ENCODE measurements at regions of chr3 and their contacts with region 1.

Region 1: DNA sequence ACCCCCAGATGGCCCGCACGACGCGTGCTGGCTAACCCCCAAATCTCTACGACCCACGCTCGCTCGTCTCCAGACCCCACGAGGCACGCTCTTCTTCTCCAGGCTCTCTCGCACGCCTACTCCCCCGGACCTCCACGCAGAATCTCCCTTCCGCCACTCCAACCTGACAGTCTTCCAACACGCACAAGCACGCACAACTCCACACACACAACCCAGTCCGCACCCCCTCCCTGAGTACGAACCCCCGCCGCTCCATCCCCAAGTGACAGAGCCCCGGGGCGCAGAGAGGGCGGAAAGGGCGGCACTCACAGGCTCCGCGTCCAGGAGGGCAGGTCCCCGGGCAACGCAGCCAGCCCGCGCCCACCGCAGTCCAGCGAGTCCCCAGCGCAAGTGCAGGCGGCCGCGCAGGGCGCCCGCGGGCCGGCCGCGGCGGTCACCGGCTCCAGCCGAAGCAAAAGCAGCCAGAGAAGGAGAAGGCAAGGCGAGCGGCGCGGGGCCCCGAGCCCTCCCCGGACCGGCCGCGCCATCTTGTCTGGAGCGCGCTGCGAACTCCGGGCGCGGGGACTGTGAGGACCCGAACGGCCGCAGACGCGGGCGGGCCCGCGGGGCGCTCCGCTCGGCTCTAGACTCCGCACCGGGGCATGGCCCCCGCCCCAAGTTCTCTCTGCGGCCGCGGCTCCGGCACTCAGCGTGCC is 794 bp downstream of the LRIG1 start:
- DNase-seq: peak; percentile 54
- H3K4me3 ChIP-seq: peak overlapping the region; percentile 90
- H3K27ac ChIP-seq: peak overlapping the region; percentile 90
- H3K4me1 ChIP-seq: peaks cover 18% of the 10 kb centered on the region
- H3K27me3 ChIP-seq: no peaks in the 10 kb centered on the region
- CTCF ChIP-seq: no peak

Region 2: GRCh38 chr3:65371053-65371452 is 1129.0 kb before region 1 on chr3:
- intact Hi-C with region 1: no loop called
- DNase-seq: no peak
- H3K4me3 ChIP-seq: no peak overlapping the region
- H3K27ac ChIP-seq: no peak overlapping the region
- H3K4me1 ChIP-seq: no peaks in the 10 kb centered on the region
- H3K27me3 ChIP-seq: no peaks in the 10 kb centered on the region
- CTCF ChIP-seq: no peak

Region 3: GRCh38 chr3:66407611-66408218 is 92.3 kb before region 1 on chr3:
- intact Hi-C with region 1: loop called (anchors 10 kb)
- DNase-seq: peak; percentile 85
- H3K4me3 ChIP-seq: no peak overlapping the region
- H3K27ac ChIP-seq: no peak overlapping the region
- H3K4me1 ChIP-seq: peaks cover 6% of the 10 kb centered on the region
- H3K27me3 ChIP-seq: no peaks in the 10 kb centered on the region
- CTCF ChIP-seq: peak; percentile 89

Region 4: DNA sequence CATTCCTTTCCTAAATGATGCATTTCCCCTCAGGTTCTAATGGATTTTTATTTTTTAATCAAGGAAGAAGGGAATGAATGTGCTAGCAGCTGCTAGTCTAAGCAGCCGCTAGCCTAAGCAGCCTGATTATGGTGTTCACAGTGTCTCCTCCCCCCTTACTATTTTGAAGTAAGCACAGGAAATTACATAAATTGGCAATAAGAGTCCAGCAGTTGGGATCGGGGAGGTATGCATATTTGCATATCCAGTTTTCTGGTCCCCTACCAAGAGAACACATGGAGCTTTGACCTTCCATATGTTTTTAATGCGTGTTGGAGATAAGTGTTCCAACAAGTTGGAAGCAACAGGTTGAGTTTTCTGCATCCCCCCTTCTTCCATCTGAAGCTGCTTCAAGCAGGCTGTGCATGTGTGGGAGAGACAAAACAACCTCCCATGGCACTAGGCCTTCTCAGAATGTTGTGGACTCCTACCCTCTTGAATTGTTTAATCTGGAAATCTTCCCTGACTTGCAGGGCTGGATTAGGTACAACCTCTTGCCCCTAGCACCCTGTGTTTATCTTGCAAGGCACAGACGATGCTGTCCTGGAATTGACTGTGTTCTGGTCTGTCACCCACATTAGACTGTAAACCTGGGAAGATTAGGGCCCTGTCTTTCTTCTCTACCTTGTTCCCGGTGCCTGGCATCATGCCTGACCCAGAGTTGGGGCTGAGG is 125.6 kb after region 1 on chr3:
- intact Hi-C with region 1: no loop called
- DNase-seq: no peak
- H3K4me3 ChIP-seq: no peak overlapping the region
- H3K27ac ChIP-seq: no peak overlapping the region
- H3K4me1 ChIP-seq: no peaks in the 10 kb centered on the region
- H3K27me3 ChIP-seq: no peaks in the 10 kb centered on the region
- CTCF ChIP-seq: no peak

Measured in colonic mucosa (tissue), 4 donors.